T-cell (primary cell): ENCODE measurements at regions of chr2 and their contacts with region 1.

Region 1: GRCh38 chr2:24046930-24047702 is at the start of gene WDCP:
- DNase-seq: peak; percentile 72 to 96 (median 91)
- ATAC-seq: peak; percentile 99 to 100 (median 100)
- H3K4me3 ChIP-seq: peak within 1 kb of the TSS; percentile 70
- H3K4me3 Mint-ChIP-seq: peak within 1 kb of the TSS; percentile 91 to 99 (median 94)
- H3K27ac ChIP-seq: peak within 1 kb of the TSS; percentile 34
- H3K27ac Mint-ChIP-seq: peak within 1 kb of the TSS; percentile 85 to 97
- H3K4me1 ChIP-seq: peaks cover 8 to 23% of the 10 kb centered on the region in 2 experiments
- H3K4me1 Mint-ChIP-seq: peaks cover 29 to 35% (median 34%) of the 10 kb centered on the region in 3 donors
- H3K27me3 ChIP-seq: peaks cover 2 to 28% of the 10 kb centered on the region in 2 experiments
- H3K27me3 Mint-ChIP-seq: peaks cover 0 to 1% of the 10 kb centered on the region in 2 donors
- total RNA-seq, gene WDCP: 6.1 to 18.9 (median 18.2) TPM

Region 2: DNA sequence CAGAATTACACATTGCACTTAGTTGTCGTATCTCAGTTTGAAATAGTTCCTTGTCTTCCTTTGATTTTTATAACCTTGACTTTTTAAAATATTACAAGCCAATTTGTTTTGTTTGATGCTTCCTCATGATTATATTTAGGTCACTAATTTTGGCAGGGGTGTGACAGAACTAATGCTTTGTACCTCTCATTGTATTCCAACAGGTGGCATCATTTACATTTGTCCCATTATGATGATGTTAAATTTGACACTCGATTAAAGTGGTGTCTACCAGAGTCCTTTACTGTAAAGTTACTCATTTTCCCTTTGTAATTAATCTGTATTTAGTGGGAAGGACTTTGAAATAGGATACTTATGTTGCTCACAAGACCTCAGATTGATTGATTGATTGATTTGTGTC is 58.7 kb before region 1 on chr2:
- CTCF ChIA-PET with region 1: interaction called, 3 to 4 read pairs
- POLR2A ChIA-PET with region 1: interaction called in 1 of 2 experiments, 12 read pairs
- DNase-seq: peak in 1 of 35 experiments; percentile 44
- ATAC-seq: peak in 2 of 4 experiments; percentile 55 to 63
- H3K4me3 ChIP-seq: no peak overlapping the region
- H3K4me3 Mint-ChIP-seq: no peak overlapping the region
- H3K27ac ChIP-seq: no peak overlapping the region
- H3K27ac Mint-ChIP-seq: no peak overlapping the region
- H3K4me1 ChIP-seq: no peaks in the 10 kb centered on the region
- H3K4me1 Mint-ChIP-seq: no peaks in the 10 kb centered on the region
- H3K27me3 ChIP-seq: no peaks in the 10 kb centered on the region
- H3K27me3 Mint-ChIP-seq: no peaks in the 10 kb centered on the region

Region 3: DNA sequence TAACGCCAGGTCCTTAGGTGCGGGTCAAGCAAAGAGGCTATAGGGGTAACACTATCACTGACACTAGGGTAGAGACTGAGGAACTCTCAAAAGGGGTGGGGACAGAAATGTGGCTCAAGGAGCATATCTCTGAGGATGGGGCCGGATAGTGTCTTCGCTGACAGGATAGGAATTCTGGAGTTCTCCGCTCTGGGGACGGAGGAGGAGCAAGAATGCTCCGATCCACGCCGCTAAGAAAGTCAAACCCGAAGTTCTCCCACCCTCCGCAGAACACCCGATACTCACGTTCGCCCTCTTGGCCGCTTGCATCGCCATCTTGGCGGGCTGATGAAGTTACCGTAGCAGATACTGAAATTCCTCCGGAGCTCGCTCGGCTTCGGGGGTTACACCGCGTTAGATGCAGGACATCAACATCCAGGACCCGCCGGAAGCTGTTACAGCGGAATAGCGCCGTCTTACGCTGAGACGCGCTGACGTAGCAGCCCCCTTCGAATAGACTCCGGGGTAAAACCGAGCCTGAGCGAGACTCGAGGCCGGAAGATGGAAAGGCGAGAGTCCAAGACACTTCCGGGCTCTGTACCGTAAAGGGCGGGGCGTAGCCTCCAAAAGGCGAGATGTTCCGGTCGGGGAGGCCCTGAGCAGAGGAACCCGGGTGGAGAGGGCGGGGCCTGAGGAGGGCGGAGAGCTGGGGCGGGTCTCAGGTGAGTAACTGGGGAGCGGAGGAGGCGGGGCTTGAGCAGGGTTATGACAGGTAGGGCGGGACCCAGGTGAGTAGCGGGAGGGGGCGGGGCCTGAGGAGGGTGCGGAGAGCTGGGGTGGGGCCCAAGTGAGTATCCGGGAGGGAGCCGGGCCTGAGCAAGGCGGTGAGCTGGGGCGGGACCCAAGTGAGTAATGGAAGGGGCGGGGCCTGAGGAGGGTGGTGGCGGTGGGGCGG is 29.1 kb after region 1 on chr2 and contains the start of gene SF3B6:
- CTCF ChIA-PET with region 1: interaction called in 1 of 2 experiments, 15 read pairs
- POLR2A ChIA-PET with region 1: interaction called, 3 to 26 read pairs
- DNase-seq: peak; percentile 98 to 100 (median 100)
- ATAC-seq: peak; percentile 84 to 88 (median 86)
- H3K4me3 ChIP-seq: peak within 1 kb of the TSS; percentile 93 to 97
- H3K4me3 Mint-ChIP-seq: peak within 1 kb of the TSS; percentile 96 to 100 (median 98)
- H3K27ac ChIP-seq: peak within 1 kb of the TSS; percentile 94
- H3K27ac Mint-ChIP-seq: peak within 1 kb of the TSS; percentile 98 to 100
- H3K4me1 ChIP-seq: peaks cover 7 to 25% of the 10 kb centered on the region in 2 experiments
- H3K4me1 Mint-ChIP-seq: peaks cover 33 to 39% (median 38%) of the 10 kb centered on the region in 3 donors
- H3K27me3 ChIP-seq: no peaks in the 10 kb centered on the region
- H3K27me3 Mint-ChIP-seq: no peaks in the 10 kb centered on the region
- total RNA-seq, gene SF3B6: 43.7 to 53.0 (median 47.0) TPM